ENCODE measurements at regions of chr12 and their contacts with region 1.

Region 1: GRCh38 chr12:2860170-2860569 is 3.3 kb upstream of the TEX52 start:
- DNase-seq: no peak
- H3K4me3 ChIP-seq: no peak overlapping the region
- H3K27ac ChIP-seq: no peak overlapping the region
- H3K4me1 ChIP-seq: peaks cover 0 to 8% (median 6%) of the 10 kb centered on the region in 4 donors
- H3K27me3 ChIP-seq: no peaks in the 10 kb centered on the region
- CTCF ChIP-seq: no peak
- EP300 ChIP-seq: no peak
- POLR2A ChIP-seq: no peak

Region 2: DNA sequence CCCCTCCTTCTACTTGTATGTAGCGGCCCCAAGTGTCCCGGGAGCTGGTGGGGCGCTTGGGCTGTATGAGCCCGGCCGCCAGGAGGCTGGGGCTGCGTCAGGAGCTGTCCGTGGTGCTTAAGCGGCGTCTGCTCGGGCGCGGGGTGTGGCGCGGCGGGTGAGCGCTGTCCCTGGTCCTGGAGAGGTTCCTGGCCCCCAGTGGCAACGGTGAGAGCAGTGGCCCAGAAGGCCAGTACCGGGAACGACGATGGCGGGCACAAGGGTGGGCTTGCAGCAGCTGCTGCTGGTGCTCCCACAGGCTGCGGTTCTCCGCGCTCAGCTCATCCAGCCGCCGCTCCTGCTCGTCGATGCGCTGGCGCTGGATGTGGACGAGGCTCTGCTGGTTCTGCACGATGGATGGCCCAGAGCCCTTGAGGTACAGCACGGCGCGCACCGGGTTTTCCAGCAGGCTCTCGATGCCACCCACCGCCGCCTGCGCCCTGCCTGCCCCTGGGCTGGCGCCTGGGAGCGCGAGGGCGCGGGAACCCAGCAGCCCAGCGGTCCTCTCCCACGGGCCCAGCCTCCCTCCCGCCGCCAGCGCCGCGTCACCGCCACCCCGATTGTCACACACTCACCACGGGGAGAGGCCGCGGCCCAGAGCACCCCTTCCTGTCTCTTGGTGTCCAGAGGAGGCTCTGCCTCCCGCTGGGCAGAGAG is 107.3 kb before region 1 on chr12:
- in situ Hi-C with region 1: no loop called
- intact Hi-C with region 1: no loop called
- DNase-seq: peak; percentile 74
- H3K4me3 ChIP-seq: no peak overlapping the region
- H3K27ac ChIP-seq: no peak overlapping the region
- H3K4me1 ChIP-seq: no peaks in the 10 kb centered on the region
- H3K27me3 ChIP-seq: peaks cover 20% of the 10 kb centered on the region
- CTCF ChIP-seq: no peak
- EP300 ChIP-seq: no peak
- POLR2A ChIP-seq: no peak

Region 3: GRCh38 chr12:3017281-3017680 is 157.1 kb after region 1 on chr12:
- in situ Hi-C with region 1: no loop called
- intact Hi-C with region 1: loop called (anchors 1 kb)
- DNase-seq: no peak
- H3K4me3 ChIP-seq: no peak overlapping the region
- H3K27ac ChIP-seq: no peak overlapping the region
- H3K4me1 ChIP-seq: no peaks in the 10 kb centered on the region
- H3K27me3 ChIP-seq: no peaks in the 10 kb centered on the region
- CTCF ChIP-seq: no peak
- EP300 ChIP-seq: no peak
- POLR2A ChIP-seq: no peak

Region 4: DNA sequence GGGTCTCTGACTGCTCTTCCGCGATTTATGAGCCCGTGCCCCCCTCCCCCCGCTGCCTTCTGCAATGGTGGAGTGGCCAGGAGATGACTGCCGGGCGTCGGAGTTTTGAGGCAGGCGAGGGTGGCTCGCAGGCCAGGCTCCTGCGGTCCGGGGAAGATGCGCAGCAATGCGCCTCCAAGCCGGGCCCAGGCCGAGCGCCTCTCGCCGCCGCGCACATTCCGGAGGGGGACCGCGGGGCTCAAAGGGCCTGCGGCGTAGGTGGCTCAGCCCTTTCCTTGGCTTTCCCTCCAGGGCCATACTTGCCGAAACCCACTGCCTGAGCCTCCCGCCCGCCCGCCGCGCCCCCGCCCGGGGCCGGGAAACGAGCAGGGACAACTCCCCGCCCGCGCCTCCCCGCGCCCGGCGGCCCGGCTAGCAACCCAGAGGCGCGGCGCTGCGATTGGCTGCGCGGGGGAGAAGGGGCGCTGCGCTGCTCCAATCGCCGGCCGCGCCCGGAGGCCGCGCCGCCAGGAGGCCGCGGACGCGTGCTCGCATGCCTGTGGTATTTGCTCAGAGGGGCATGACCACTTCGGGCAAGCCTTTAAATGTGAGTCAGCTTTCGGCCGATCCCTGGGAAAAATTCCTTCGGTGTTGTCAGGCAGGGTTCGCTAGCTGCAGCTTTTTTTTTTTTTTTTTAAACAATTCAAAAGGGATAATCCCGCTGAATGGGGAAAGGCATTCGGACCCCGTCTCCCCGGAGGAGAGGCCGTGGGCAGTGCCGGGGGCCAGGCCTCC is 1170.9 kb after region 1 on chr12:
- in situ Hi-C with region 1: no loop called
- intact Hi-C with region 1: no loop called
- DNase-seq: peak; percentile 92
- H3K4me3 ChIP-seq: peak overlapping the region; percentile 42 to 56 (median 45)
- H3K27ac ChIP-seq: peak overlapping the region; percentile 84 to 88 (median 86)
- H3K4me1 ChIP-seq: peaks cover 8 to 21% (median 13%) of the 10 kb centered on the region in 4 donors
- H3K27me3 ChIP-seq: no peaks in the 10 kb centered on the region
- CTCF ChIP-seq: no peak
- EP300 ChIP-seq: no peak
- POLR2A ChIP-seq: peak; percentile 45